CD14-positive monocyte (primary cell): ENCODE measurements at regions of chr12 and their contacts with region 1.

Region 1: GRCh38 chr12:46303039-46303666 is 34.3 kb upstream of the SLC38A1 start:
- DNase-seq: peak; percentile 39 to 66 (median 62)
- H3K4me3 ChIP-seq: no peak overlapping the region
- H3K4me3 Mint-ChIP-seq: no peak overlapping the region
- H3K27ac ChIP-seq: no peak overlapping the region
- H3K27ac Mint-ChIP-seq: no peak overlapping the region
- H3K4me1 ChIP-seq: no peaks in the 10 kb centered on the region
- H3K4me1 Mint-ChIP-seq: peaks cover 5% of the 10 kb centered on the region
- H3K27me3 ChIP-seq: no peaks in the 10 kb centered on the region
- H3K27me3 Mint-ChIP-seq: peaks cover 0 to 2% (median 0%) of the 10 kb centered on the region in 3 donors
- CTCF ChIP-seq: peak; percentile 76

Region 2: GRCh38 chr12:46153268-46153872 is 149.8 kb before region 1 on chr12:
- intact Hi-C with region 1: loop called in 1 of 2 experiments (anchors 10 kb)
- DNase-seq: peak in 2 of 3 donors; percentile 4 to 11
- H3K4me3 ChIP-seq: no peak overlapping the region
- H3K4me3 Mint-ChIP-seq: no peak overlapping the region
- H3K27ac ChIP-seq: no peak overlapping the region
- H3K27ac Mint-ChIP-seq: no peak overlapping the region
- H3K4me1 ChIP-seq: no peaks in the 10 kb centered on the region
- H3K4me1 Mint-ChIP-seq: peaks cover 3% of the 10 kb centered on the region
- H3K27me3 ChIP-seq: no peaks in the 10 kb centered on the region
- H3K27me3 Mint-ChIP-seq: peaks cover 0 to 3% (median 0%) of the 10 kb centered on the region in 3 donors
- CTCF ChIP-seq: peak; percentile 78

Region 3: GRCh38 chr12:46282829-46283228 is 20.3 kb before region 1 on chr12:
- intact Hi-C with region 1: no loop called
- DNase-seq: no peak
- H3K4me3 ChIP-seq: no peak overlapping the region
- H3K4me3 Mint-ChIP-seq: no peak overlapping the region
- H3K27ac ChIP-seq: no peak overlapping the region
- H3K27ac Mint-ChIP-seq: no peak overlapping the region
- H3K4me1 ChIP-seq: no peaks in the 10 kb centered on the region
- H3K4me1 Mint-ChIP-seq: no peaks in the 10 kb centered on the region
- H3K27me3 ChIP-seq: no peaks in the 10 kb centered on the region
- H3K27me3 Mint-ChIP-seq: no peaks in the 10 kb centered on the region
- CTCF ChIP-seq: no peak